ENCODE measurements at regions of chr7 and their contacts with region 1.

Region 1: GRCh38 chr7:70595753-70596597 is 536.0 kb upstream of the GALNT17 start:
- DNase-seq: no peak
- ATAC-seq: peak; percentile 76
- H3K4me3 ChIP-seq: peak overlapping the region; percentile 29 to 35
- H3K27ac ChIP-seq: no peak overlapping the region
- H3K4me1 ChIP-seq: 0 out of 2 replicates have a peak, but pooled peaks cover 4% of the 10 kb centered on the region
- H3K27me3 ChIP-seq: peaks cover 21% of the 10 kb centered on the region
- CTCF ChIP-seq: no peak

Region 2: GRCh38 chr7:69208276-69208675 is 1387.7 kb before region 1 on chr7:
- CTCF ChIA-PET with region 1: no interaction called
- POLR2A ChIA-PET with region 1: interaction called, 10 read pairs
- in situ Hi-C with region 1: no loop called
- intact Hi-C with region 1: no loop called
- DNase-seq: no peak
- ATAC-seq: no peak
- H3K4me3 ChIP-seq: no peak overlapping the region
- H3K27ac ChIP-seq: no peak overlapping the region
- H3K4me1 ChIP-seq: no peaks in the 10 kb centered on the region
- H3K27me3 ChIP-seq: no peaks in the 10 kb centered on the region
- CTCF ChIP-seq: no peak

Region 3: GRCh38 chr7:70693686-70694360 is 97.8 kb after region 1 on chr7:
- CTCF ChIA-PET with region 1: no interaction called
- POLR2A ChIA-PET with region 1: no interaction called
- in situ Hi-C with region 1: no loop called
- intact Hi-C with region 1: loop called (anchors 10 kb)
- DNase-seq: no peak
- ATAC-seq: peak; percentile 90
- H3K4me3 ChIP-seq: peak overlapping the region; percentile 23 to 48; a peak in 3 of 4 replicates
- H3K27ac ChIP-seq: no peak overlapping the region
- H3K4me1 ChIP-seq: no peaks in the 10 kb centered on the region
- H3K27me3 ChIP-seq: peaks cover 20% of the 10 kb centered on the region
- CTCF ChIP-seq: peak; percentile 9; the same call in 1 of the 2 replicates